ENCODE measurements at regions of chr2 and their contacts with region 1.

Region 1: GRCh38 chr2:85595301-85596025 is at the start of gene RNF181:
- DNase-seq: peak; percentile 95 to 100 (median 99)

Region 2: DNA sequence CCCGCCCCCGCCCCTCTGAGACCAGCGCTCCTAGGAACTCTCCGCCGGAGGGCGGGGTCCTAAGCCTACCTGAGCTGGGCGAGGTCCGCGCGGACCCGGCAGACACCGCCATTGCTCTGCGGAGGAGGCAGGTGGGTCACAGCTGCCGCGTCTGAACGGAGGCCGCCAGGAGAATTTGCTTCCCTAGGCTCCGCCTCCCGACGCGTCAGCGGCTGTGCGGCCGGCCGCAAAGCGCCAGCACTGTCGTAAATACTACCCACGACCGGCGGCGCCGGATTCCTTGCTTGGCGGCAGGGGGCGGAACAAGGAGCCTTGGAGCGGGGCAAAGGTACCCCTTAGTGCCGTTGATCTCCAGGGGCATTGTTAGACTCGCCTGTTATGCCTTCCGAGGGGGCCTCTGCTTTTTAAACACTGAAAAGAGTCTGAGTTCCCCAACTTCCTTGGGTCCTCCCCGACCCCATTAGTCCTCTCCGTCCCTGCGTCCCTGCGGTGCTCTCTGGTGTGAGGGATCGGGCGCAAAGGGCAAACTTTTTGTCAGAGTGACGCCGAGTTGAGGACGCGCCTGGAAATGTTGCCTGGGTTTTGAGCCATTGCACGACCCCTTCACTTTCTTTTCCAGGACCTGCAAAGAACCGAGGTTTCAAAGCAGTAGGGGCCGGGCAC is 34.0 kb before region 1 on chr2 and contains the start of gene GGCX:
- intact Hi-C with region 1: loop called (anchors 2 kb)
- DNase-seq: peak; percentile 93 to 98 (median 95)

Measured in posterior cingulate gyrus (tissue), 11 donors.